ENCODE measurements at regions of chr11 and their contacts with region 1.

Region 1: GRCh38 chr11:1652771-1653540 is 23.4 kb downstream of the KRTAP5-5 start:
- DNase-seq: peak; percentile 76
- ATAC-seq: peak; percentile 87
- H3K4me3 Mint-ChIP-seq: no peak overlapping the region
- H3K27ac Mint-ChIP-seq: no peak overlapping the region
- H3K4me1 Mint-ChIP-seq: no peaks in the 10 kb centered on the region
- H3K27me3 Mint-ChIP-seq: peaks cover 22% of the 10 kb centered on the region

Region 2: DNA sequence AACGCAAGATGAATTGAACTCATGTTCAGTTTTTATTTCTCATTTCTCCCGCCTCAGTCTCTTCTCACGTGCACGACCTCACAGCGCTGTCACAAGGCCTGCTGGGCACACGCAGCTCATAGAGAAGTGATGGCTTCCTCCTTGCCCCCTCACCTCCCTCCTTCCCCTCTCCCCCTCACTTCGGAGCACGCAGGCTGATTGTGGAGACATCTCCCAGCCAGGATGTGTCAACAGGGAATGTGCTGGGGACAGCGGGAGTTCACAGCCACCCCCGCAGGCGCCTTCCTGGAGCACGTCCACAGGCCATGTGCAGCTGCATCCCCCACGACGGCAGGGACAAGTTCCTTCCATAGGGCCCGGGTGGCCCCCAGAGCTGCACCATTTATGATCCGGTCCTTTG is 14.9 kb after region 1 on chr11:
- CTCF ChIA-PET with region 1: no interaction called
- DNase-seq: no peak
- ATAC-seq: no peak
- H3K4me3 Mint-ChIP-seq: no peak overlapping the region
- H3K27ac Mint-ChIP-seq: no peak overlapping the region
- H3K4me1 Mint-ChIP-seq: no peaks in the 10 kb centered on the region
- H3K27me3 Mint-ChIP-seq: peaks cover 36% of the 10 kb centered on the region

Region 3: GRCh38 chr11:1682225-1682905 is 29.4 kb after region 1 on chr11:
- CTCF ChIA-PET with region 1: interaction called, 17 read pairs
- DNase-seq: no peak
- ATAC-seq: no peak
- H3K4me3 Mint-ChIP-seq: no peak overlapping the region
- H3K27ac Mint-ChIP-seq: no peak overlapping the region
- H3K4me1 Mint-ChIP-seq: no peaks in the 10 kb centered on the region
- H3K27me3 Mint-ChIP-seq: peaks cover 6% of the 10 kb centered on the region

Region 4: GRCh38 chr11:1807264-1807995 is 154.5 kb after region 1 on chr11:
- CTCF ChIA-PET with region 1: interaction called, 11 read pairs
- DNase-seq: no peak
- ATAC-seq: no peak
- H3K4me3 Mint-ChIP-seq: no peak overlapping the region
- H3K27ac Mint-ChIP-seq: no peak overlapping the region
- H3K4me1 Mint-ChIP-seq: no peaks in the 10 kb centered on the region
- H3K27me3 Mint-ChIP-seq: peaks cover 43% of the 10 kb centered on the region

Region 5: GRCh38 chr11:1882519-1883238 is 229.7 kb after region 1 on chr11:
- CTCF ChIA-PET with region 1: interaction called, 13 read pairs
- DNase-seq: peak; percentile 77
- ATAC-seq: peak; percentile 91
- H3K4me3 Mint-ChIP-seq: no peak overlapping the region
- H3K27ac Mint-ChIP-seq: no peak overlapping the region
- H3K4me1 Mint-ChIP-seq: peaks cover 5% of the 10 kb centered on the region
- H3K27me3 Mint-ChIP-seq: no peaks in the 10 kb centered on the region

Region 6: GRCh38 chr11:1939006-1939625 is 286.2 kb after region 1 on chr11:
- CTCF ChIA-PET with region 1: no interaction called
- DNase-seq: peak; percentile 61
- ATAC-seq: peak; percentile 70
- H3K4me3 Mint-ChIP-seq: no peak overlapping the region
- H3K27ac Mint-ChIP-seq: no peak overlapping the region
- H3K4me1 Mint-ChIP-seq: peaks cover 6% of the 10 kb centered on the region
- H3K27me3 Mint-ChIP-seq: no peaks in the 10 kb centered on the region